MCF 10A (cell line): ENCODE measurements at regions of chr6 and their contacts with region 1.

Region 1: GRCh38 chr6:81752138-81752920 is at the start of gene TENT5A:
- DNase-seq: peak; percentile 90
- H3K4me3 Mint-ChIP-seq: peak within 1 kb of the TSS; percentile 98
- H3K27ac Mint-ChIP-seq: peak within 1 kb of the TSS; percentile 88
- H3K4me1 Mint-ChIP-seq: peaks cover 18% of the 10 kb centered on the region
- H3K27me3 Mint-ChIP-seq: no peaks in the 10 kb centered on the region
- CTCF ChIP-seq: no peak
- total RNA-seq, gene TENT5A: 2.5 and 3.9 TPM in 2 replicates

Region 2: GRCh38 chr6:80541181-80541580 is 1211.1 kb before region 1 on chr6:
- CTCF ChIA-PET with region 1: no interaction called
- POLR2A ChIA-PET with region 1: no interaction called
- intact Hi-C with region 1: loop called (anchors 5 kb)
- DNase-seq: peak; percentile 94
- H3K4me3 Mint-ChIP-seq: peak overlapping the region; percentile 32
- H3K27ac Mint-ChIP-seq: peak overlapping the region; percentile 68
- H3K4me1 Mint-ChIP-seq: peaks cover 86% of the 10 kb centered on the region
- H3K27me3 Mint-ChIP-seq: no peaks in the 10 kb centered on the region
- CTCF ChIP-seq: no peak

Region 3: GRCh38 chr6:81465859-81466258 is 286.5 kb before region 1 on chr6:
- CTCF ChIA-PET with region 1: no interaction called
- POLR2A ChIA-PET with region 1: no interaction called
- intact Hi-C with region 1: loop called (anchors 5 kb)
- DNase-seq: peak; percentile 49
- H3K4me3 Mint-ChIP-seq: no peak overlapping the region
- H3K27ac Mint-ChIP-seq: no peak overlapping the region
- H3K4me1 Mint-ChIP-seq: no peaks in the 10 kb centered on the region
- H3K27me3 Mint-ChIP-seq: no peaks in the 10 kb centered on the region
- CTCF ChIP-seq: peak; percentile 48

Region 4: DNA sequence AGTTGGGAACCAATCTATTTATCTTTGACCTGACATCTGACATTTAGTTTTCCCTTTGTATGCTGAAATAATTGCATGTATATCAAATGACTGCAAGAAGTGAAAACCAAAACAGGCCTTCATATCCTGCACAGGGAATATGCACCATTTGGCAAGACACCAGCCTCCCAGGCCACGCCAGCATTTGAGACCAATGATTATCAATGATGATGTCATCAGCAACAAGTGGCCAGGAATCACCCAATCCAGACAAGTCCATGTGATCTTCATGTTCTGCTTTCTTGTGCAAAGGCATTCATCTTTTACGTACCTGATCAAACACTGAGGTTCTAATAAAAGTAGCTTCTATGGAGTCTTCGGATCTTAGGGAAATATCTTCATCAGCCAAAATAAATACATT is 107.6 kb after region 1 on chr6:
- CTCF ChIA-PET with region 1: no interaction called
- POLR2A ChIA-PET with region 1: no interaction called
- intact Hi-C with region 1: no loop called
- DNase-seq: no peak
- H3K4me3 Mint-ChIP-seq: no peak overlapping the region
- H3K27ac Mint-ChIP-seq: no peak overlapping the region
- H3K4me1 Mint-ChIP-seq: no peaks in the 10 kb centered on the region
- H3K27me3 Mint-ChIP-seq: no peaks in the 10 kb centered on the region
- CTCF ChIP-seq: no peak

Region 5: DNA sequence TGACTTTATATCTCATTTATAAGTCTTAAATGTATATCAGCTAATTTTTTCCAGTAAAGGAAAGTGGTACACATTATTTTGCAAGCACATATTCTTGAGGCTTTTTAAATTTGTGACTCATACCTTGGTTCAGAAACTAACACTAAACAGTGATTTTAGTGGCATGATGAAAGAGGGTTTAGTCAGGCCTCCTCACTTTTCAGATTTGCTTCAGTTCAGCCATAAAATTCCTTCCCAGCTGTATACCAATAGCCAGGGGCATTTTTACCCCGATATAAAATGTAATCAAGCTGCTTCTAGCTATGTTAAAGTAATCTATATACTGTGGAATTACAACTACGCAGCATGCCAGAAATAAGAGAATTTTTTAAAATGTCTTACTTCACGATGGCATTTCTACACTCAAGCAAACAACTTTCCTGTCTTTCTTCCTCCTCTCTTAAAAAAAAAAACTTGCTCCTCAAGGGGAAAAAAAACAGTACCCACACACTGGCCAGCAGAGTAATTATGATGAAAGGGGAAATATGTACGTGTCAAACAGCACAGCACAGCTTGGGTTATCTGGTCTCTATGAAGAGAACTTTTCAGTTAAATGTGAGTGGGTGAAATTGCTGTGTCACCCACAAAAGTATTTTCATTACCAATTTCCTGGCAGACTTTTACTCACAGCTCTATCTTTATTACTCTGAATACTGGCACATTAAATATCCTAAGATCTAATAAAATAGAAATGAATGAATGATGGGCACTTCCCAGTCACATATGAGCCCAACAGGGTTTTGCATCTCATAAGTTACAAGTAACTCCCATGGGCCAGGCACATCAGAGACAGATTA is 245.0 kb after region 1 on chr6:
- CTCF ChIA-PET with region 1: interaction called, 4 read pairs
- POLR2A ChIA-PET with region 1: interaction called, 35 read pairs
- intact Hi-C with region 1: no loop called
- DNase-seq: peak; percentile 81
- H3K4me3 Mint-ChIP-seq: peak overlapping the region; percentile 43
- H3K27ac Mint-ChIP-seq: peak overlapping the region; percentile 96
- H3K4me1 Mint-ChIP-seq: peaks cover 49% of the 10 kb centered on the region
- H3K27me3 Mint-ChIP-seq: no peaks in the 10 kb centered on the region
- CTCF ChIP-seq: no peak

Region 6: GRCh38 chr6:82022601-82023102 is 270.3 kb after region 1 on chr6:
- CTCF ChIA-PET with region 1: interaction called, 5 read pairs
- POLR2A ChIA-PET with region 1: interaction called, 19 read pairs
- intact Hi-C with region 1: no loop called
- DNase-seq: peak; percentile 83
- H3K4me3 Mint-ChIP-seq: no peak overlapping the region
- H3K27ac Mint-ChIP-seq: no peak overlapping the region
- H3K4me1 Mint-ChIP-seq: peaks cover 13% of the 10 kb centered on the region
- H3K27me3 Mint-ChIP-seq: no peaks in the 10 kb centered on the region
- CTCF ChIP-seq: no peak

Region 7: GRCh38 chr6:82144007-82144851 is 391.9 kb after region 1 on chr6:
- CTCF ChIA-PET with region 1: no interaction called
- POLR2A ChIA-PET with region 1: interaction called, 11 read pairs
- intact Hi-C with region 1: loop called (anchors 10 kb)
- DNase-seq: peak; percentile 91
- H3K4me3 Mint-ChIP-seq: peak overlapping the region; percentile 57
- H3K27ac Mint-ChIP-seq: peak overlapping the region; percentile 89
- H3K4me1 Mint-ChIP-seq: peaks cover 25% of the 10 kb centered on the region
- H3K27me3 Mint-ChIP-seq: no peaks in the 10 kb centered on the region
- CTCF ChIP-seq: no peak